Activated T-helper 1 cell treated with anti-CD3 and anti-CD28 coated beads, Interleukin-12 subunit alpha, Interleukin-12 subunit beta, Interleukin-2, Interleukin-4 antibody, amounts not matched to agents 30 ng/mL and 10 ng/mL and 1 ng/mL, durations not matched to agents 14 hours and 24 hours and 36 hours (primary cell): ENCODE measurements at regions of chr7 and their contacts with region 1.

Region 1: DNA sequence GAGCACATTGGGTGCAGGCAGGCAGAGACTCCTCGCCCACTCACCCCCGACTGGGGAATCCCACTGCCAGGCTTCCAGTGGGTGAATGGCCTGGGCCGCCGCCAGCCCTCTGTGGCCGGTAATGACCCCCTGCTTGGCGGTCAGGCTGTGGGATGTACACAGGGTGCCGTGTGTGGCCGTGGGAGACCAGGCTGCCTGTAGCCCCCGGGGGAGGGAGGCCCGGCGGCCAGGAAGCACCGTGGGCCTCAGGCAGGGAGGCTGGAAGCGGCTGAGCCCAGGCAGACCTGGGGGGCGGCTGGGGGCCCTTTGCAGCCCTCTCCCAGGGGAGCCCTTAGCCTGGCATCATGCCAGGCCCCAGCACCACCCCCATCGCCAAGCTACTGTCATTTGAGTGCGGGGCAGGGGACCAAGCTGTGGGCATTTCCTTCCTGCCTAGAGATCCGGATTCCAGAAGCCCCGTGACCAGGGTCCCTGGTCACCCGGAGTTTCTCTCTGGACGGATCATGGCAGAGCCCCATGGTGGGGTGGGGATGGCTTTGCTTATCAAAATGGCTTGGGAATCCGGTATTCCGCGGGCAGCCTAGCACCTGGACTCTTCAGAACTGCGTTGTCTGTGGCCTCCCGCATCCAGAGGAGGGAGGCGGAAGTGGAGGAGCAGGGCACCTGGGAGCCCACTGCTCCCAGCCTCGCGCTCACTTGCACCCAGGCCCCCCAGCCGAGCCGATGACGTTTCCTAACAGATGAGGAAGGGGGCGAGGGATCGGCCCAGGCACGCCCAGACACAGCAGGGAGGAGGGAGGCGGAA is 1.1 kb downstream of the TTYH3 start:
- DNase-seq: peak; percentile 24
- H3K4me3 Mint-ChIP-seq: peak overlapping the region; percentile 91
- H3K27ac Mint-ChIP-seq: peak overlapping the region; percentile 81
- H3K4me1 Mint-ChIP-seq: peaks cover 15% of the 10 kb centered on the region
- H3K27me3 Mint-ChIP-seq: no peaks in the 10 kb centered on the region

Region 2: DNA sequence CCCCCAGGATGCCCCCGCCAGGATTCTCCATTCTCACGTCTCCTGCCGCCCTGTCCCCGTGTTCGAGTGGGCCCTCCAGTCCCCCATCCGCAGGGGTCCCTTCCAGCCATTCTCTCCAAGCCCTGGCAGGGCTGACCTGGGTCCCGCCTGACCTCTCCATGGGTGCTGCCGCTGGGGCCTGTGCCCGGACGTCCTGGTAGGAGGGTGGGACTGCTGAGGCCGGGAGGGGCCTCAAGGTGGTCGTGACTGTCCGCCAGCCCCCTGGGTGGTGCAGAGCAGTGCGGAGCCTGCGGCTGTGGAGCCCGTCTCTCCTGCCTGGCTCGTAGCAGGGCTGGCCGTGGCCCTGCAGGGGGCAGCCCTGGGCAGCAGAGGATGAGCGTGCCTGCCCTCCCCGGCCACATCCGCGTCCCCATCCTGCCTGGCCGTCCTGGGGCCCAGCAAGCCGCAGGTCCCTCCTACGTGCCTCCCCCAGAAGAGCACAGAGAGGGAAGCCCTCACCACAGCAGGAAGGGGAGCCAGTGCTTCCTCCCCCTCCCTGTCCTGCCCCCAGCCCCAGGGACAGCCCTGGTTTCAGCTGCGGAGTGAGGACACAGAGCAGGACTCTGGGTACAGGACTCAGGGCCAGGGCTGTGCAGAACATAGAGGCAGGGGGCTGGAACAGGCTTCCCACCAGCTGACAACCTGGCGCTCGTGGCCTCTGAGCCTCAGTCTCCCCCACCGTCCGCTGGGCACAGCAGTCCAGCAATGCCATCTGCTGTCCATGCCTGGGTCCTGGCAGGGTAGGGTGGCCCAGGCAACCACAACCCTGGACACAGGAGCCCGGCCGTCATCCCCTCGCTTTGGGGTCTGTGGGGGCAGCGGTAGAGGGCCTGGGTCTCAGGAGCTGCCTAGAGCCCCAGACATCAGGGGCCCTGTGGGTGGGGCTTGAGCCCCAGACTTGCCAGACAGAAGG is 155.2 kb before region 1 on chr7:
- intact Hi-C with region 1: loop called (anchors 1 kb)
- DNase-seq: peak; percentile 52
- H3K4me3 Mint-ChIP-seq: no peak overlapping the region
- H3K27ac Mint-ChIP-seq: no peak overlapping the region
- H3K4me1 Mint-ChIP-seq: no peaks in the 10 kb centered on the region
- H3K27me3 Mint-ChIP-seq: peaks cover 5% of the 10 kb centered on the region

Region 3: DNA sequence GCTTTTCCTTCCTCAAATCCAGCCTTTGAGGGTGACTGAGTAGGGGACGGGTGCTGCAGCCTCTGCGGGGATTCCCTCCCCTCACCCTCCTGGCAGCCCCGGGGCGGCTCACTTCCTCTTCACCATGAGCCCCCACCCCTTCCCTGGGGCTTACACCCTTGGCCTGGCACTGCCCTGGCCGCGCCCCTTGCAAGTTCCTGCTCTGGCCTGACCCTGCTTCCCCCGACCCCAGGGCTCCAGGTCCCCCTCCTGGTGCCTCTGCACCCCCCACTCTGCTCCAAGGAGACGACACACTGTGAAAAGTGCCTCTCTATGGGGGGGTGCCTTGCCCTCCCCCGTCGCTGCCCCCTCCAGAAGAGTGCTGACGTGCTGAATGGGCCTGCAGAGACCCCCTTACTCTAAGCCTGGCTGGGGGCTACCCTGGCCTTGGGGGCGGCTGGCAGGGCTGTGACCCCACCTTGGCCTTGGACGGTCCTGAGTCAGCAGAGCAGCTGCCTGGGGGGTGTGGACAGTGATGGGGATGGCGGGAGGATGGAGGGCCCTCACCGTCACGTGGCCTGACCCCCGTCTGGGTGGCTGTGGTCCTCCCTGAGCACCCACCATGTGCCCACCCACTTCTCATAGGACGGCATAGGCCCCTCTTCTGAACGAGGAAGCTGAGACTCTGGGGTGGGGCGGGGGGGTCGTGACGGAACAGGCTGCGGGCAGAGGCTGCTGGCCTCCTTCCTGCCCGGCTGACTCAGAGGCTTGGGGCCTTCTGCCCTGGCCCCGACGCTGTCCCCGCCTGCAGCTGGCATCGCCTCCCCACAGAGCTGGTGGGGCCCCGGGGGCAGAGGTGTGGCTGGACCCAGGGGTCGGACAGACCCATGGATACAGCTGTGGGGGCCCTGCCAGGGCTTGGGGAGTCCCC is 103.5 kb before region 1 on chr7:
- intact Hi-C with region 1: loop called (anchors 1 kb)
- DNase-seq: peak; percentile 60
- H3K4me3 Mint-ChIP-seq: peak overlapping the region; percentile 74
- H3K27ac Mint-ChIP-seq: peak overlapping the region; percentile 97
- H3K4me1 Mint-ChIP-seq: peaks cover 34% of the 10 kb centered on the region
- H3K27me3 Mint-ChIP-seq: no peaks in the 10 kb centered on the region

Region 4: GRCh38 chr7:2844165-2844898 is 211.4 kb after region 1 on chr7 and contains the start of gene GNA12:
- intact Hi-C with region 1: loop called (anchors 1 kb)
- DNase-seq: peak; percentile 99
- H3K4me3 Mint-ChIP-seq: peak within 1 kb of the TSS; percentile 90
- H3K27ac Mint-ChIP-seq: peak within 1 kb of the TSS; percentile 72
- H3K4me1 Mint-ChIP-seq: peaks cover 31% of the 10 kb centered on the region
- H3K27me3 Mint-ChIP-seq: no peaks in the 10 kb centered on the region
- total RNA-seq, gene GNA12: 36.3 and 36.4 TPM in 2 replicates